CD8-positive, alpha-beta T cell (primary cell): ENCODE measurements at regions of chr12 and their contacts with region 1.

Region 1: GRCh38 chr12:31325877-31326631 is at the start of gene SINHCAF:
- DNase-seq: peak; percentile 94 to 99 (median 99)
- ATAC-seq: peak; percentile 55
- H3K4me3 ChIP-seq: peak within 1 kb of the TSS; percentile 81 to 97
- H3K4me3 Mint-ChIP-seq: peak within 1 kb of the TSS; percentile 92
- H3K27ac ChIP-seq: peak within 1 kb of the TSS; percentile 92 to 96
- H3K27ac Mint-ChIP-seq: peak within 1 kb of the TSS; percentile 93
- H3K4me1 ChIP-seq: peaks cover 22% of the 10 kb centered on the region
- H3K4me1 Mint-ChIP-seq: peaks cover 31% of the 10 kb centered on the region
- H3K27me3 ChIP-seq: no peaks in the 10 kb centered on the region
- H3K27me3 Mint-ChIP-seq: no peaks in the 10 kb centered on the region
- CTCF ChIP-seq: no peak
- total RNA-seq, gene SINHCAF: 93.7 to 108 TPM

Region 2: DNA sequence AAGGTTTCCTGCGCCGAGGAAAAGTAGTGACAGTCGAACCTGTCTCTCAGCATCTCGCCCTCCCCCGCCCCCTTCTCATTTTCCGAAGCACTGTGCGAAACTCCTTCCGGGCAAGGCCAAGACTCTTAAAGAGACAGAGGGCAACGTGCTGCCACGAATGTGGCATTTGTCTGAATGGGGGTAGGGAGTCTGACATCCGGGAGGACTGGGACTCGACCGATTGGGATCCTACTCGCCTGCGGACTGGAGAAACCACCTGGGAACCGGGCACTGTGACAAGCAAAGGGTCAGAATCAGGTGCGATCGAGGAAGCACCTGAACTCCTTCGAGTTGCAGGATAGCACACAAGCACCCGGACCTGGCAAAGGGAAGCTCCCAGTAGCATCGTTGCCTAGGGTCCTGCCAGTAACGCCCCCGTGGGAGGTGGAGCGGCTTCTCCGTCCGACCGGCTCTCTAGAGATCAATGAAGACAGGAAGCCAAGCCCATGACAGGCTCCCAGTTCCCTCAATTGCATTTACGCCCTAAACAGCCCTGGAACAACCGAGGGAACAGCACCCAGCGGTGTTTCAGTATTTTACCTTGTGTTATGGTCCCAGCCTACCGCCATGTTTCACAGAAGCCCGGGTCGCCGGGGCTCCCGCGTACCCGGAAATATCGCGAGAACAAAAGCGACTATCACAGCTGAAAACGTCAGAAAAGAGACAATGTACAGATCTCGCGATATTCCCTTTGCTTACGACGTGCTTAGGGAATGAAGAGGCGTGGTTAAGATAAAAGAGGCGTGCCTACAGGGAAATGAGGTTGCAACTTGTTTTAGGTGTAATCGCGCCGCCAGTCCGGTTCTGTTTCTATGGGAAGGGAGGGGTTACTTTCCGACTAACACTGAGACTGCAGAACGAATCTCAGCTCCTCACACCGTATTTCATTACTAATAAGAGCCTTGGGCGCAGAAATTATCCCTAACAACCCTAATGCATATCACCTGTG is 1945.2 kb before region 1 on chr12 and contains the start of gene ERGIC2:
- CTCF ChIA-PET with region 1: no interaction called
- POLR2A ChIA-PET with region 1: no interaction called
- intact Hi-C with region 1: loop called in 1 of 2 experiments (anchors 5 kb)
- DNase-seq: peak; percentile 79 to 99 (median 89)
- ATAC-seq: peak; percentile 91
- H3K4me3 ChIP-seq: peak within 1 kb of the TSS; percentile 83 to 94
- H3K4me3 Mint-ChIP-seq: peak within 1 kb of the TSS; percentile 86
- H3K27ac ChIP-seq: peak within 1 kb of the TSS; percentile 91 to 92
- H3K27ac Mint-ChIP-seq: peak within 1 kb of the TSS; percentile 92
- H3K4me1 ChIP-seq: peaks cover 19% of the 10 kb centered on the region
- H3K4me1 Mint-ChIP-seq: peaks cover 56% of the 10 kb centered on the region
- H3K27me3 ChIP-seq: no peaks in the 10 kb centered on the region
- H3K27me3 Mint-ChIP-seq: no peaks in the 10 kb centered on the region
- CTCF ChIP-seq: no peak
- total RNA-seq, gene ERGIC2: 25.4 to 33.2 TPM

Region 3: GRCh38 chr12:30754709-30755394 is 571.2 kb before region 1 on chr12 and contains the start of gene CAPRIN2:
- CTCF ChIA-PET with region 1: no interaction called
- POLR2A ChIA-PET with region 1: interaction called, 3 read pairs
- intact Hi-C with region 1: loop called (anchors 2 to 5 kb)
- DNase-seq: peak; percentile 89 to 98 (median 93)
- ATAC-seq: peak; percentile 90
- H3K4me3 ChIP-seq: peak within 1 kb of the TSS; percentile 69 to 74
- H3K4me3 Mint-ChIP-seq: peak within 1 kb of the TSS; percentile 92
- H3K27ac ChIP-seq: peak within 1 kb of the TSS; percentile 66 to 69
- H3K27ac Mint-ChIP-seq: peak within 1 kb of the TSS; percentile 86
- H3K4me1 ChIP-seq: peaks cover 19% of the 10 kb centered on the region
- H3K4me1 Mint-ChIP-seq: peaks cover 44% of the 10 kb centered on the region
- H3K27me3 ChIP-seq: no peaks in the 10 kb centered on the region
- H3K27me3 Mint-ChIP-seq: no peaks in the 10 kb centered on the region
- CTCF ChIP-seq: no peak
- total RNA-seq, gene CAPRIN2: 16.2 to 17.4 TPM

Region 4: GRCh38 chr12:31288381-31288780 is 37.7 kb before region 1 on chr12:
- CTCF ChIA-PET with region 1: no interaction called
- POLR2A ChIA-PET with region 1: no interaction called
- intact Hi-C with region 1: loop called in 1 of 2 experiments (anchors 5 kb)
- DNase-seq: no peak
- ATAC-seq: no peak
- H3K4me3 ChIP-seq: no peak overlapping the region
- H3K4me3 Mint-ChIP-seq: no peak overlapping the region
- H3K27ac ChIP-seq: no peak overlapping the region
- H3K27ac Mint-ChIP-seq: peak overlapping the region; percentile 7
- H3K4me1 ChIP-seq: no peaks in the 10 kb centered on the region
- H3K4me1 Mint-ChIP-seq: no peaks in the 10 kb centered on the region
- H3K27me3 ChIP-seq: no peaks in the 10 kb centered on the region
- H3K27me3 Mint-ChIP-seq: no peaks in the 10 kb centered on the region
- CTCF ChIP-seq: no peak

Region 5: DNA sequence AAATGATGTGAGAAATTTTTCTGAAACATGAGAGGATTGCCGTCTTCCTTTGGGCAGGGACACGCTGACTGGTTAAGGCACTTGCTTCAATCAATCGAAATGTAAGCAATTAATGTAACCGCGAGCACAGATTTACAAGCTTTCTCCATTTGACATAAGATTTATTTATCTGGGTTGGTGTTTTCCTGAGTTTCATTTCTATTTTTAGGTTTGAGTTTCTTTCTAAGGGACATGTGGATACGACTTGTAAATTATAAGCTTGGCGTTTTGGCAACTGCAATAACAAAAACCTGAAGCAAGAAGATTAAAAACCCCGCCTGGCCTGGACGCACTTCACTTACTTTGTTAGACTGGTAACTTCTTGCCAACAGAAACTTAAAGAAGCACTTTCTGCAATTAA is 20.2 kb after region 1 on chr12:
- CTCF ChIA-PET with region 1: no interaction called
- POLR2A ChIA-PET with region 1: no interaction called
- intact Hi-C with region 1: no loop called
- DNase-seq: no peak
- ATAC-seq: no peak
- H3K4me3 ChIP-seq: no peak overlapping the region
- H3K4me3 Mint-ChIP-seq: no peak overlapping the region
- H3K27ac ChIP-seq: no peak overlapping the region
- H3K27ac Mint-ChIP-seq: no peak overlapping the region
- H3K4me1 ChIP-seq: no peaks in the 10 kb centered on the region
- H3K4me1 Mint-ChIP-seq: no peaks in the 10 kb centered on the region
- H3K27me3 ChIP-seq: no peaks in the 10 kb centered on the region
- H3K27me3 Mint-ChIP-seq: no peaks in the 10 kb centered on the region
- CTCF ChIP-seq: no peak

Region 6: GRCh38 chr12:31659087-31659933 is 333.3 kb after region 1 on chr12 and contains the start of gene ETFBKMT:
- CTCF ChIA-PET with region 1: no interaction called
- POLR2A ChIA-PET with region 1: interaction called, 3 read pairs
- intact Hi-C with region 1: loop called (anchors 2 kb)
- DNase-seq: peak; percentile 84 to 97 (median 92)
- ATAC-seq: peak; percentile 99
- H3K4me3 ChIP-seq: peak within 1 kb of the TSS; percentile 82 to 87
- H3K4me3 Mint-ChIP-seq: peak within 1 kb of the TSS; percentile 98
- H3K27ac ChIP-seq: peak within 1 kb of the TSS; percentile 89 to 92
- H3K27ac Mint-ChIP-seq: peak within 1 kb of the TSS; percentile 100
- H3K4me1 ChIP-seq: peaks cover 11% of the 10 kb centered on the region
- H3K4me1 Mint-ChIP-seq: peaks cover 14% of the 10 kb centered on the region
- H3K27me3 ChIP-seq: no peaks in the 10 kb centered on the region
- H3K27me3 Mint-ChIP-seq: no peaks in the 10 kb centered on the region
- CTCF ChIP-seq: peak; percentile 22
- total RNA-seq, gene ETFBKMT: 0.41 to 1.0 TPM

Region 7: DNA sequence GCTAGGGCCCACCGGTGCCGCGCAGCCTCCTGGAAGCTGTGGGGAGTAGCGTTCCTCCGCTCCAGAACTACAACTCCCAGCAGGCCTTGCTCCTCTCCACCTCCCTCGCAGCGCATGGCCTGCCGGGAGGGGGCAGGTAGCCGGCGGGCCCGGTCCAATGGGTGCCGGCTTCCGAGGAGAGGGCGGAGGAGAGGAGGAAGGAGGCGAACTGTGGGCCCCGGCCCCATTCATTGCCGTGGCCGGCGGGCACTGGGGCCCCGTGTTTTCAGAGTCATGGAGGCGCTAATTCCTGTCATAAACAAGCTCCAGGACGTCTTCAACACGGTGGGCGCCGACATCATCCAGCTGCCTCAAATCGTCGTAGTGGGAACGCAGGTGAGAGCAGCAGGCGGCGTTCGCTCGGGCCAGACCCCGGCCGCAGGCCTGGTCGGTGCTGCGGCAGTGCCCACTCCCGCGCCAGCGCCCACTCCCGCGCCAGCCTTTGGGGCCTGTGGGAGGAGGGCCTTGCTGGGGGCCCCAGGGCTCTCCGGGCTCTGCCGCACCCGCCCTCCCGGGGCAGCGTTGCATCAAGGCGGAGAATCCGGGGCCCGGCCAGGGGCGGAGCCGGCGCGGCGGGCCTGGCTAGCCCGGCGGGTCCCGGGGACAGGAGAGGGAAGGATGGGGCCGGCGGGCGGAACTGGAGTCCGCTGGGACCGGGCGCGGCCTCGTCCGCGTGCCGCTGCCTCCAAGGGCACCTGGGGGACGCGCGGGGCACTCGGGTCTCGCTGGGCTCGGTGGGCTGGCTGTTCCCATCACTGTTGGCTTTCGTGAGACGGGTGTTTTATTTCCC is 1353.3 kb after region 1 on chr12 and contains the start of gene DNM1L:
- CTCF ChIA-PET with region 1: no interaction called
- POLR2A ChIA-PET with region 1: no interaction called
- intact Hi-C with region 1: loop called (anchors 1 to 5 kb)
- DNase-seq: peak; percentile 85 to 96 (median 93)
- ATAC-seq: peak; percentile 98
- H3K4me3 ChIP-seq: peak within 1 kb of the TSS; percentile 62 to 76
- H3K4me3 Mint-ChIP-seq: peak within 1 kb of the TSS; percentile 94
- H3K27ac ChIP-seq: peak within 1 kb of the TSS; percentile 71 to 87
- H3K27ac Mint-ChIP-seq: peak within 1 kb of the TSS; percentile 90
- H3K4me1 ChIP-seq: peaks cover 11% of the 10 kb centered on the region
- H3K4me1 Mint-ChIP-seq: peaks cover 30% of the 10 kb centered on the region
- H3K27me3 ChIP-seq: no peaks in the 10 kb centered on the region
- H3K27me3 Mint-ChIP-seq: no peaks in the 10 kb centered on the region
- CTCF ChIP-seq: no peak
- total RNA-seq, gene DNM1L: 76.1 to 77.1 TPM